Activated T-helper 2 cell treated with anti-CD3 and anti-CD28 coated beads, Interferon-gamma antibody, Interleukin-2, Interleukin-4, amounts not matched to agents 10 μg/mL and 5 μg/mL and 100 μg/mL, durations not matched to agents 14 hours and 24 hours and 36 hours (primary cell): ENCODE measurements at regions of chr2 and their contacts with region 1.

Region 1: GRCh38 chr2:20097879-20098714 is 46.7 kb upstream of the LAPTM4A start:
- DNase-seq: peak; percentile 46
- H3K4me3 Mint-ChIP-seq: no peak overlapping the region
- H3K27ac Mint-ChIP-seq: no peak overlapping the region
- H3K4me1 Mint-ChIP-seq: peaks cover 4% of the 10 kb centered on the region
- H3K27me3 Mint-ChIP-seq: peaks cover 10% of the 10 kb centered on the region

Region 2: DNA sequence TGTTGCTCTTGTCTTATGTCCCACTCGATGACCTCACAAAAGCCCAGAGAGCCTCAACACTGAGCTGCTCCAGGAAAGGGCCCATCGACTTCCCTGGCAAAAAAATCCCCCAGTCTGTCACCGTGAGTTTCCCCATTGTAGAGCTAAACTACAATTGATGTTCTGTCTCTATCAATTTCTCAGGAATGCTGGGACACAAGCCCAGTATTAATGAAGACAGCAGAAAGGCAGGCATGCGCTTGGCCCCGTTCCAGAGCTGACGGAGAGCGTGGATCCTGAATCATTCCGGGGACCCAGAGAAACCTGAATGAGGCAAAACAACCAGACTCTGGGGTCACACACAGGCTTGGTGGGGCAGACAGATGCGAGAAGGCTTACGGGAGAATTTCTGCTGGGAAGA is 343.2 kb before region 1 on chr2:
- intact Hi-C with region 1: no loop called
- DNase-seq: no peak
- H3K4me3 Mint-ChIP-seq: no peak overlapping the region
- H3K27ac Mint-ChIP-seq: no peak overlapping the region
- H3K4me1 Mint-ChIP-seq: no peaks in the 10 kb centered on the region
- H3K27me3 Mint-ChIP-seq: peaks cover 1% of the 10 kb centered on the region

Region 3: DNA sequence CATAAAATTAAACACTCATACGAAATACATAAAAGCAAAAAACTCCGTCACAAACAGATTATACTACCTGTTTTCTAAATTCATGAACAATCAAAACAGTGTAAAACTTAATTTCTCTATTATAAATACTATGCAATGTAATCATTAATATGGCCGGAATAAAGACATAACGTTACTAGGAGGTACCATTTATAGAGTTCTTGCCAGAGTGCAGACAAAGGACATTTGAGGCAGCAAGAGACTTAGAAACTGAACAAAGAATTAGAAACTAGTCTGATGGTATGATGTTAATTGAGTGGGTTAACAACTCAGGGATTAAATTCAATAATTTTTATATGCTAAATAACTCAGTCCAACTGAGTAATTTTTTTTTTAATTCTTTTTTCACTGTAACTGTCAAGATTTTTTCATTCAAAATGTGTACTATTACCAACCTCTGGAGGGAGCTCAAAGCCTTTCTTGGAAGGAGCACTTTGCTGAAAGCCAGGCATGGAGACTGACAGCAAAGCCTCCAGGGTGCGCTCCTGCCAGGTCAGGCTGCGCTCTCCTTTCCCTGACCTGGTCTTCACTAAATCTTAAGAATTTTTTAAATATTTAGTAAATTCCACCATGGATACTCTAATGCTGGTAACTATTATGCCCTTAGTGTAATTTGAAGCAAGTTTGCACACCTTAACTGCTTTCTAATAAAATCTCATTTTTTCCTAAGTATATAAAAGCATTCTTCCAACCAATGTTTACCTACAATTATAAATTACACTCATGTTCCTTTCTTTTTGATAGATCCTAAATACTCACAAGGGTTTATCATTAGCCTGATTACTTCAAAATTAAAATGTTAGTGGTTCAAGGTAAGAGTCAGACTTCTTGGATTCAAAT is 142.3 kb before region 1 on chr2:
- intact Hi-C with region 1: loop called (anchors 1 kb)
- DNase-seq: peak; percentile 22
- H3K4me3 Mint-ChIP-seq: no peak overlapping the region
- H3K27ac Mint-ChIP-seq: no peak overlapping the region
- H3K4me1 Mint-ChIP-seq: no peaks in the 10 kb centered on the region
- H3K27me3 Mint-ChIP-seq: no peaks in the 10 kb centered on the region

Region 4: GRCh38 chr2:20698916-20699613 is 601.0 kb after region 1 on chr2:
- intact Hi-C with region 1: no loop called
- DNase-seq: no peak
- H3K4me3 Mint-ChIP-seq: no peak overlapping the region
- H3K27ac Mint-ChIP-seq: no peak overlapping the region
- H3K4me1 Mint-ChIP-seq: peaks cover 10% of the 10 kb centered on the region
- H3K27me3 Mint-ChIP-seq: no peaks in the 10 kb centered on the region